Gastrocnemius medialis (tissue), 4 donors: ENCODE measurements at regions of chr2 and their contacts with region 1.

Region 1: DNA sequence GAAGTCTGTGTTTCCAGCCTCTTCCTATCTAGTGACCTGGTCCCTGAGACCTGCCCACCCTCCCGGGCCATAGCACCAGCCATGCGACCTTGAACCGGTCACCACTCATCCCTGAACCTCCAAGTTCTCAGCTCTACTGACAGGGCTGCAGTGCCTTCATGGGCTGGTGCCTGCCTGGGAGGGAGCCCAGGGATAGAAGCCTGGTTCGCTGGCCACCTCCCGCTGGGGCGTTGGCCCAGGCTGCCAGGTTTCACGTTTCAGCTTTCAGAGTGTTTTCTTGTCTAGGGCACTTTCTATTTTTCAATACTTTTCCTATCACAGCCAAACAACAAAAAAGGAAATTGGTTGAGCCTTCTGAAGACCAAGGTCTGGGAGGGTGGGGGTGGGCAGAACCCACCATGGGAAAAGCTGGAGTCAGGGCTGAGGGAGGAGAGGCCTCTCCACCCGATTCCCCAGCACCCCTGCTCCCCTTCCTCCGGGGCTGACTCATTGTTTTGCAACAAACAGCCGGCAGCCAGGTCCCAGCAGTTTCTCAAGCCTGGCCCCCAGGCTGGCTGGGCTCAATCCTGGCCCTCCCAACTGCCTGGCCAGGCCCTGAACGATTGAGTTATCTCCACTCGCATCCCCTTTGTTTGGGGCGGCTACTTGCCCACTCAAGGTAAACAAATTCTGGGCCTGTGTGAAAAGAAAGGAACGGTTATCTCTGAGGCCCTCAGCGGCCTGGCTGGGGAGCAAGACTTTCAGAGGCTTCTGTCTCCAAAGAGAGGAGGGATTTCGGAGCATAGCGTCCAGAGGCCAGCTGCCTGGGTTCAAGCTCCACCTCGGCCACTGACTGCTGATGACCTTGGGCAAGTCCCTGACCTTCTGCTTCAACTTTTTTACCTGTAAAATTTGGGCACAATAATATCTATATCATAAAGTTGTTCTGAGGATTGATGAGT is 47.5 kb downstream of the ZFP36L2 start:
- DNase-seq: peak; percentile 83 to 94
- ATAC-seq: peak; percentile 93 to 94
- H3K4me3 ChIP-seq: peak overlapping the region; percentile 23 to 43 (median 39)
- H3K27ac ChIP-seq: peak overlapping the region; percentile 91 to 98 (median 94)
- H3K4me1 ChIP-seq: peaks cover 19 to 25% of the 10 kb centered on the region in 2 donors
- H3K27me3 ChIP-seq: no peaks in the 10 kb centered on the region
- CTCF ChIP-seq: no peak
- POLR2A ChIP-seq: peak; percentile 49 to 52

Region 2: DNA sequence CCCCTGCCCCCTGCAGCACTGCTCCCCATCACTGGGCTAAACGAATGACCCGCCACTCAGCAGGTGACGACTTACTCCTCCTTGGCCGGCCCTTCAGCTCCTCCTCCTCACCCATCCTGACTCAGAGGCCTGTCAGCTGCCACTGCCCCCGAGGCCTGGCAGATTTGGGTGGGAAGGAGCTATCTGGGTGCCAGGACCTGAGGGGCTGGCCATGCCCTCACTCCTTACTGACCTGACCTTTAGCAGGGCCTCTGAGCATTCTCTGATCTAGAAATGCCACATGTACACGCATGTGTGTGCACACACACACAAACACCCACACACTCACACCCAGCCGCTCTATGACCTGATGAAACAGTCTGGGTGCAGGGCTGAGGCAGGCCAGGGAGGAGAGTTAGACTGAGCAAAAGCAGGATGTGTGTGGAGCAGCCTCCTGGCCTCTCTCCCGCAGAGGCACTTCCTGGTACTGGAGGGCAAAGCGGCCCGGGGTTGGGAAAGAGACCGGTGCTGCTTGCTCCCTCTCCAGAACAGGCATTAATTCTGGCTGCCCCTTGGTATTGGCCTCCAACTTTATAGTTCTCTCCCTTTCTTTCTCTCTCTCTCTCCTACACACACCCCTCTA is 20.5 kb before region 1 on chr2:
- in situ Hi-C with region 1: no loop called
- intact Hi-C with region 1: loop called (anchors 2 kb)
- DNase-seq: peak; percentile 40 to 79
- ATAC-seq: peak; percentile 38 to 73
- H3K4me3 ChIP-seq: peak overlapping the region in 2 of 4 donors; percentile 32 to 36
- H3K27ac ChIP-seq: peak overlapping the region; percentile 82 to 93 (median 90)
- H3K4me1 ChIP-seq: peaks cover 28 to 34% of the 10 kb centered on the region in 2 donors
- H3K27me3 ChIP-seq: no peaks in the 10 kb centered on the region
- CTCF ChIP-seq: no peak
- POLR2A ChIP-seq: no peak

Region 3: DNA sequence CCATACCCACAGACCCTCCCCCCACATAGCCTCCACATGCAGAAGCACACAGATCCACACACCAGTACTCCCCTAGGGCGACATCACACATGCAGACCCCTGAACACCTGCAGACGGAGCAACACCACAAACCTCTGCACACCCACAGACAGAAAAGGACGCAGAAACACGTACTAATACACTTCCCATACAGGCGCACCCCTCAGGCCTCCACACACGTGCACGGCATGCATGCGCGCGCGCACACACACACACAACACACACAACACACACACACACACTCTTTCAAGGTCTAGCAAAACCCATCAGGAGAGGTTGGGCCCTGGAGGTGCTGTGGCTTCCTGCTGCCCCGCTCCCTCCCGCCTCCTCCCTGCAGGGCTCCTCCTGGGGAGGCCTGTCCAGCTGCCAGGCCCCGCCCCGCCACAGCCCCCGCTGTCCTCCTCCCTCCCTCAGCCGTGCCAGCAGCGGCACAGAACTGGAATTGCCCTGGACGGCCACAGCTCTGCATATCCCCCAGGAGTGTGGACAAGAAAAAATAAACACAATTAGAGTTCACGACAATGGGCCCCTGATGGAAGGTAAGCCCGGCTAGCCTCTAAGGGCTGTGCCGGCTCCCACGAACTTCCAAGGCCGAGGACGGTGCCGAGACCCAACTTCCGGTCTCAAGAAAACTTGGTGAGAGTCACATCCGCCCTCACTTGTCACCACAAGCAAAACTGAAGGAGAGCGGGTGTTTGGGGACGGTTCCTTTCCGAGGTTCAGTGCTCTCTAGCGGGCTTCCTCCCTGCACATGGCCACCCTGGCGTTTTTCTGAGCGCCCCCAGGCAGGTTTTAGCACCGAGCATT is 40.7 kb after region 1 on chr2:
- in situ Hi-C with region 1: loop called in 2 of 4 experiments (anchors 5 to 10 kb)
- intact Hi-C with region 1: no loop called
- DNase-seq: peak; percentile 72 to 85
- ATAC-seq: peak; percentile 46 to 65
- H3K4me3 ChIP-seq: peak overlapping the region; percentile 76 to 99 (median 96)
- H3K27ac ChIP-seq: peak overlapping the region; percentile 99 to 100 (median 100)
- H3K4me1 ChIP-seq: peaks cover 73 to 76% of the 10 kb centered on the region in 2 donors
- H3K27me3 ChIP-seq: no peaks in the 10 kb centered on the region
- CTCF ChIP-seq: no peak
- POLR2A ChIP-seq: peak; percentile 43 to 67

Region 4: DNA sequence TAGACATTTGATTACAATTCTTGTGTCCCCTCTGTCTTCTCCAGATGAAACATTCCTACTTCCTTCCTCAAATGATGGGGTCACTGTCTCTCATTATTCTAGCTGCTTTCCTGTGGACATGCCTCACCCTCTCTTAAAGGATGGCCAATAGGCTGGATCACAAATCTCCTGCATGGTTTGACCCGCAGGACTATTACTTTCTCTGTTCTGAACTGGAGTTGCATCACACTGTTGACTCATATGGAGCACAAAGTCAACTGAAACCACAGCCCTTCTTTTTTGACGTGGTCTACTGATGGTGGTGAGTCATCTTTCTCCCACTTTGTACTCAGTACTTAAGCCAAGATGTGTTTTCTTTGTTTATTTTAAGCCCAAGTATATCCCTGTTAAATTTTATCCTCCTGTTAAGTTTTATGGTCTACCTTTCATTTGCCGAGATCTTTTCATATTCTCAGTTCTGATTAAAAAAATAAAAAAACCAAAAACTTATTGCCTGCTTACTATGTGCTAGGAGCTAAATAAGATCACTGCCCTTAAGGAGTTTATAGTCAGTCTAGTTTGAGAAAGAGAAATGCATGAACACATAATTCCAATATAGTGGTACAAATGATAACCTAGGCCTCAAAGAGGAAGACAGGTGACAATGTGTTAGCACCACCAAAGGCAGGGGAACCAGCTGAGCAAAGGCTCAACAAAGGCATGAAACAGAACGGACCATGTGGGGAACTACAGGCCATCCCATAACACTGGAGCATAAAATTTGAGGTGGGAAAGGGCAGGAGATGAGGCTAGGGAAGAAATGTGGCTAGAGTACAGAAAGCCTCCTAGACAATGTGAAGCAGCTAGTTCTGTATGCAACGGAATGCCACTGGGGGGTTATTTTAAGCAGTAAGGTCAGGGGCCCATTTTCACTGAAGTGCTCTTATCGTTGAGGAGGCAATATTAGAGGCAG is 115.1 kb after region 1 on chr2:
- in situ Hi-C with region 1: no loop called
- intact Hi-C with region 1: loop called (anchors 2 kb)
- DNase-seq: peak; percentile 73 to 78
- ATAC-seq: peak; percentile 100
- H3K4me3 ChIP-seq: no peak overlapping the region
- H3K27ac ChIP-seq: peak overlapping the region; percentile 76 to 92 (median 84)
- H3K4me1 ChIP-seq: peaks cover 17 to 22% of the 10 kb centered on the region in 2 donors
- H3K27me3 ChIP-seq: no peaks in the 10 kb centered on the region
- CTCF ChIP-seq: no peak
- POLR2A ChIP-seq: peak in 1 of 2 donors; percentile 20

Region 5: GRCh38 chr2:43995733-43996533 is 817.1 kb after region 1 on chr2 and contains the start of gene LRPPRC:
- in situ Hi-C with region 1: no loop called
- intact Hi-C with region 1: loop called (anchors 5 kb)
- DNase-seq: peak; percentile 95
- ATAC-seq: peak; percentile 99
- H3K4me3 ChIP-seq: peak within 1 kb of the TSS; percentile 78 to 99 (median 96)
- H3K27ac ChIP-seq: peak within 1 kb of the TSS; percentile 74 to 97 (median 92)
- H3K4me1 ChIP-seq: peaks cover 22 to 35% of the 10 kb centered on the region in 2 donors
- H3K27me3 ChIP-seq: no peaks in the 10 kb centered on the region
- CTCF ChIP-seq: peak in 1 of 5 experiments; percentile 22
- POLR2A ChIP-seq: peak; percentile 77 to 94
- total RNA-seq, gene LRPPRC: 75.9 to 95.3 (median 81.5) TPM

Region 6: GRCh38 chr2:44201648-44202165 is 1022.8 kb after region 1 on chr2:
- in situ Hi-C with region 1: no loop called
- intact Hi-C with region 1: no loop called
- DNase-seq: peak in 1 of 2 donors; percentile 40
- ATAC-seq: peak; percentile 30 to 87
- H3K4me3 ChIP-seq: no peak overlapping the region
- H3K27ac ChIP-seq: peak overlapping the region in 3 of 4 donors; percentile 0 to 56 (median 40)
- H3K4me1 ChIP-seq: peaks cover 24 to 34% of the 10 kb centered on the region in 2 donors
- H3K27me3 ChIP-seq: no peaks in the 10 kb centered on the region
- CTCF ChIP-seq: no peak
- POLR2A ChIP-seq: no peak